CD8-positive, alpha-beta T cell (primary cell): ENCODE measurements at regions of chr4 and their contacts with region 1.

Region 1: DNA sequence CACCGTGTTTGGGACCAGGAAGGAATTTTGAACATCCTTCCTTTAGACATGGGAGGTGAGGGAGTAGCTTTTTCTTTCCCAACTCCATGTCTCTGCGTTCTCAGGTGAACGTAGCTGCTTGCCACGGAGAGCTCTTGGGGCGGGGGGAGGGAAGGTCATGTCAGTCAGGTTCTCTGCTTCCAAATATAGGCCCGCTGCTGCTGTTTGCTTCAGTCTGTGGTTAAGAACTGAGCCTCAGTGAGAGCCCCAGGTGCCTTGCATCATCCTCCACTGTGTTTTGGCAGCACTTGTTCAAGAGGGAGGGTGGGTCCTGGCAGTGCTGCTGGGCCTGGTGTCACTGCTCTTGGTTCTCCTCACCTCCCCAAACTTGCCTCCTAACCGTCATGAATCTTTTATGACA is 46.5 kb downstream of the HADH start:
- DNase-seq: peak; percentile 37 to 89 (median 74)
- ATAC-seq: peak; percentile 96
- H3K4me3 ChIP-seq: peak overlapping the region in 1 of 2 experiments; percentile 29
- H3K4me3 Mint-ChIP-seq: peak overlapping the region; percentile 71
- H3K27ac ChIP-seq: peak overlapping the region; percentile 49 to 51
- H3K27ac Mint-ChIP-seq: peak overlapping the region; percentile 97
- H3K4me1 ChIP-seq: peaks cover 62% of the 10 kb centered on the region
- H3K4me1 Mint-ChIP-seq: peaks cover 57% of the 10 kb centered on the region
- H3K27me3 ChIP-seq: no peaks in the 10 kb centered on the region
- H3K27me3 Mint-ChIP-seq: no peaks in the 10 kb centered on the region
- CTCF ChIP-seq: no peak

Region 2: DNA sequence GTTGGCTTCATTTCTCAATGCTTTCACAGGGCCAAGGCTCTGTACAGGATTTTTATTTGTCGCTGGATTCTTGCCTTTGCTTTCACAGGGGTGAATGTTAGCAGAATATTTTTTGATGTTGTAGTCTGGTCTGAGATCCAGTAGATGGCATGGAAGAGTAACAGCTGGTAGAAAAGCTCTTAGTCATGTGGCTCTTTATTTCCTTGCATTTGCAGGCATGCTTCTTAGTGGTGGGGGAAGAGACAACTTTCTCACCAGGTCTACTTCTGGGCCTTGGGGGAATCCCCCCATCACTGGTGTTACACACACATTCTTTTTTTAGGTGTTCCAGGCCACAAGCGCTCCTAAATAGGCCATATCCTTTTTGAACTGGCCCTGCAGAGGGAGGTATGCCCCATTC is 941.9 kb before region 1 on chr4:
- CTCF ChIA-PET with region 1: no interaction called
- POLR2A ChIA-PET with region 1: no interaction called
- intact Hi-C with region 1: no loop called
- DNase-seq: peak in 3 of 9 experiments; percentile 21 to 43 (median 33)
- ATAC-seq: peak; percentile 67
- H3K4me3 ChIP-seq: no peak overlapping the region
- H3K4me3 Mint-ChIP-seq: no peak overlapping the region
- H3K27ac ChIP-seq: no peak overlapping the region
- H3K27ac Mint-ChIP-seq: no peak overlapping the region
- H3K4me1 ChIP-seq: no peaks in the 10 kb centered on the region
- H3K4me1 Mint-ChIP-seq: no peaks in the 10 kb centered on the region
- H3K27me3 ChIP-seq: no peaks in the 10 kb centered on the region
- H3K27me3 Mint-ChIP-seq: no peaks in the 10 kb centered on the region
- CTCF ChIP-seq: no peak

Region 3: DNA sequence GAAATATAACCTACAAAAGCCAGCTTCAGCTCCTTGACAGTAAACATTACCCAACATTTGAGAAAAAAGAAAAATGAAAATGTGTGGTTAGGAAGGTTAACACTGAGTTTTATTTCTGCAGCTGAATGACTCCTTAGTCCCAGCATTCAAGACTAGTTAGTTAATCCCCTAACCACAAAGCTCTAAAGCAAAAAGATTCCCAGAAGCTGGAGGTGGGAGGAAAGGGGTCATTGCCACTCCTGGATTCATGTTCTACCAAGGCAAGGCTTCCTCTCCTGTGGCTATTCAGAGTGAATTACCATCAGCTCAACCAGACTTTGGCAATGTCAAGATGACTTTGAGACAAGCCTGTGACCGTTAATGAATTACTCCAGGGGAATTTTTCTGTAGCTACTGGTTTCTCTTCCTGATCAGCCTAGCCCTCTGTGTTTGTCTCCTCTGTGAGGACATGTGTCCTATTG is 17.1 kb after region 1 on chr4:
- CTCF ChIA-PET with region 1: interaction called, 8 read pairs
- POLR2A ChIA-PET with region 1: interaction called, 11 read pairs
- intact Hi-C with region 1: loop called (anchors 2 kb)
- DNase-seq: no peak
- ATAC-seq: no peak
- H3K4me3 ChIP-seq: no peak overlapping the region
- H3K4me3 Mint-ChIP-seq: peak overlapping the region; percentile 49
- H3K27ac ChIP-seq: peak overlapping the region; percentile 1 to 35
- H3K27ac Mint-ChIP-seq: peak overlapping the region; percentile 95
- H3K4me1 ChIP-seq: peaks cover 96% of the 10 kb centered on the region
- H3K4me1 Mint-ChIP-seq: peaks cover 91% of the 10 kb centered on the region
- H3K27me3 ChIP-seq: no peaks in the 10 kb centered on the region
- H3K27me3 Mint-ChIP-seq: no peaks in the 10 kb centered on the region
- CTCF ChIP-seq: no peak

Region 4: DNA sequence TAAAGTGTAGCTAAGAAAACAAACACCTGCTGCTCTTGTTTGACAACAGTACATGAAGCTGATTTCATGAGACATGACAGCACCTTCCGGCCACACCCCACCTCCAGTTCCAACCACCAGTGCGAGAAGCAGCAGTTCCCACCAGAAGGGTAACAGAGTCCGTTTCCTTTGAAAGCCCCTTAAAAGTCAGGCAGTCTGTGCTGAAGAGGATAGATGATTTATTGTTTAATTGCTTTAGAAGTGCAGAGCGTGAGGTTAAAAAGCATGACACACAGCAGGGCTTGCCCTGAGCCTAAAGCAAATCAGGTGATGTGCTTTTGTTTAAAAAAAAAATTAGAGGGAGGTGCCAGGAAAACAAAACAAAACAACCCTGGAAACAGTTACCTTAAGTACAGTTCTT is 36.1 kb after region 1 on chr4:
- CTCF ChIA-PET with region 1: interaction called, 10 read pairs
- POLR2A ChIA-PET with region 1: interaction called, 4 read pairs
- intact Hi-C with region 1: loop called (anchors 1 to 5 kb)
- DNase-seq: peak; percentile 37 to 93 (median 77)
- ATAC-seq: peak; percentile 87
- H3K4me3 ChIP-seq: peak overlapping the region in 1 of 2 experiments; percentile 20
- H3K4me3 Mint-ChIP-seq: peak overlapping the region; percentile 60
- H3K27ac ChIP-seq: peak overlapping the region; percentile 67 to 76
- H3K27ac Mint-ChIP-seq: peak overlapping the region; percentile 97
- H3K4me1 ChIP-seq: peaks cover 58% of the 10 kb centered on the region
- H3K4me1 Mint-ChIP-seq: peaks cover 74% of the 10 kb centered on the region
- H3K27me3 ChIP-seq: no peaks in the 10 kb centered on the region
- H3K27me3 Mint-ChIP-seq: no peaks in the 10 kb centered on the region
- CTCF ChIP-seq: no peak

Region 5: GRCh38 chr4:108355186-108355901 is 319.1 kb after region 1 on chr4:
- CTCF ChIA-PET with region 1: no interaction called
- POLR2A ChIA-PET with region 1: no interaction called
- intact Hi-C with region 1: loop called (anchors 5 kb)
- DNase-seq: peak in 6 of 9 experiments; percentile 22 to 85 (median 41)
- ATAC-seq: peak; percentile 87
- H3K4me3 ChIP-seq: peak overlapping the region in 1 of 2 experiments; percentile 10
- H3K4me3 Mint-ChIP-seq: peak overlapping the region; percentile 55
- H3K27ac ChIP-seq: peak overlapping the region; percentile 51 to 54
- H3K27ac Mint-ChIP-seq: peak overlapping the region; percentile 91
- H3K4me1 ChIP-seq: peaks cover 47% of the 10 kb centered on the region
- H3K4me1 Mint-ChIP-seq: peaks cover 66% of the 10 kb centered on the region
- H3K27me3 ChIP-seq: peaks cover 0 to 3% of the 10 kb centered on the region in 2 experiments
- H3K27me3 Mint-ChIP-seq: no peaks in the 10 kb centered on the region
- CTCF ChIP-seq: no peak

Region 6: DNA sequence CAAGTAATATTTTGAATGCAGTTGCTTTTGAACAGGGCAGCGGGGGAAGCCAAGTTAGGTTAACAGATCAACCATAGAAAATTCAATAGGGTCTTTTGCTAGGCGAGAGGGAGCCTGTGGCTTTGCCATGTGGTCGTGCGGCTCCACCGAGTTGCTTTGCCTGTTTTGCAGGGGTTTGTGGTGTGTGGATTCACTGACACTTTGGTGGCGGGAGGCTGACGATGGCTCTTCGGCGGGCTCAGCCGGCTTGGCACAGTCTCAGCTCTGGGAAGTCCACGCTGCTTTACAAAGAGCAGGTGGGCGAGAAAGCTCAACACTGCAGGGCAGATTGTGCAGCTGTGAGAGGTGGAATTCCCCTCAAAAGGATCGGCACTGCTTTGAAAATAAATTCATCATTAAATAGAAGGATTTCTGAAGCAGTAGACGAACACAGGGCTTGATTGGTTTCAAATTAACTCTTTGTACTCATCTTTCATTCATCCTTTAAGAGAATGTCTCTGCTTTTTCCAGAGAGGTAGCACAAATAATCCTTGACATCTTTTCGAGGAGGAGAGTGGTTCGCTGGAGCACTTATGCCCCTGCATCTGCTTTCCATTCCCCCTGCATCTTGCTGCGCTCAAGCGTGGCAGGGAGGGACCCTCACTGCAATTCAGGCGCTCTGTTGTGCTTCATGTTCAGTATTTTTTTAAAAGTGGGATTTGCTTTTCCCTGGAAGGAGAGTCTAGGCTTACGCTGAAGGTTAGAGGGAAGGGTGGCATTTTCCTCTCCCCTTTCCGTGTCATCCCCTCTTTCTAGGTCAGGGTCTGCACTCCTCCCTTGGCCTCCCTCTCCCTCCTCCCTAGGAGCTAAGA is 334.3 kb after region 1 on chr4:
- CTCF ChIA-PET with region 1: no interaction called
- POLR2A ChIA-PET with region 1: interaction called, 12 read pairs
- intact Hi-C with region 1: no loop called
- DNase-seq: peak in 8 of 9 experiments; percentile 16 to 77 (median 44)
- ATAC-seq: peak; percentile 78
- H3K4me3 ChIP-seq: peak overlapping the region; percentile 40 to 51
- H3K4me3 Mint-ChIP-seq: peak overlapping the region; percentile 91
- H3K27ac ChIP-seq: peak overlapping the region in 1 of 2 experiments; percentile 14
- H3K27ac Mint-ChIP-seq: peak overlapping the region; percentile 88
- H3K4me1 ChIP-seq: peaks cover 37% of the 10 kb centered on the region
- H3K4me1 Mint-ChIP-seq: peaks cover 43% of the 10 kb centered on the region
- H3K27me3 ChIP-seq: peaks cover 0 to 8% of the 10 kb centered on the region in 2 experiments
- H3K27me3 Mint-ChIP-seq: no peaks in the 10 kb centered on the region
- CTCF ChIP-seq: no peak